ENCODE measurements at regions of chr6 and their contacts with region 1.

Region 1: DNA sequence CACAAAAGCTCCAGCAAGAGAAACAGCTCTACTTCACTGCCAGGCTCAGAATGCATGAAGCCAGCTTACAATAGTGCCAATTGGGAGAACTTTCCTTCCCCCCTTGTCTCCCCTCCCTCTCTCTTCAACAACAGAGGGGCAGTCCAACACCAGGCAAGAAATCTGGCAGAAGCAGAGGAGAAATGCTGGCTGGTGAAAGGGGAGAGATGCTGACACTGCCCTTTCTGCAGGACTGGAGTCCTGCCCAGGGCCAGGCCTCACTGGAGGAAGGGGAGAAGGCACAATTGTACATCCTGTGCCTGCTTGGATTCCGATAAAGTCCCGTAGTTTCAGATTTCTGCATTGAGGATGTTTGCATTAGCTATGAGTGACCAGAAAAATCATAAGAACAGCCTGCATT is 148.6 kb downstream of the LRRC1 start:
- DNase-seq: no peak
- ATAC-seq: peak; percentile 59 to 79 (median 70)
- H3K4me3 ChIP-seq: no peak overlapping the region
- H3K27ac ChIP-seq: no peak overlapping the region
- H3K4me1 ChIP-seq: peaks cover 0 to 15% (median 0%) of the 10 kb centered on the region in 12 donors
- H3K27me3 ChIP-seq: no peaks in the 10 kb centered on the region
- CTCF ChIP-seq: no peak
- POLR2A ChIP-seq: no peak

Region 2: GRCh38 chr6:53879608-53880007 is 63.8 kb before region 1 on chr6:
- intact Hi-C with region 1: loop called in 1 of 10 experiments (anchors 5 kb)
- DNase-seq: no peak
- ATAC-seq: no peak
- H3K4me3 ChIP-seq: no peak overlapping the region
- H3K27ac ChIP-seq: no peak overlapping the region
- H3K4me1 ChIP-seq: no peaks in the 10 kb centered on the region
- H3K27me3 ChIP-seq: no peaks in the 10 kb centered on the region
- CTCF ChIP-seq: no peak
- POLR2A ChIP-seq: no peak

Measured in heart left ventricle (tissue), 16 donors.